Astrocyte of the cerebellum (primary cell): ENCODE measurements at regions of chr22 and their contacts with region 1.

Region 1: GRCh38 chr22:31046539-31047226 is 34.4 kb upstream of the SMTN start:
- DNase-seq: no peak
- H3K4me3 ChIP-seq: no peak overlapping the region
- CTCF ChIP-seq: no peak

Region 2: DNA sequence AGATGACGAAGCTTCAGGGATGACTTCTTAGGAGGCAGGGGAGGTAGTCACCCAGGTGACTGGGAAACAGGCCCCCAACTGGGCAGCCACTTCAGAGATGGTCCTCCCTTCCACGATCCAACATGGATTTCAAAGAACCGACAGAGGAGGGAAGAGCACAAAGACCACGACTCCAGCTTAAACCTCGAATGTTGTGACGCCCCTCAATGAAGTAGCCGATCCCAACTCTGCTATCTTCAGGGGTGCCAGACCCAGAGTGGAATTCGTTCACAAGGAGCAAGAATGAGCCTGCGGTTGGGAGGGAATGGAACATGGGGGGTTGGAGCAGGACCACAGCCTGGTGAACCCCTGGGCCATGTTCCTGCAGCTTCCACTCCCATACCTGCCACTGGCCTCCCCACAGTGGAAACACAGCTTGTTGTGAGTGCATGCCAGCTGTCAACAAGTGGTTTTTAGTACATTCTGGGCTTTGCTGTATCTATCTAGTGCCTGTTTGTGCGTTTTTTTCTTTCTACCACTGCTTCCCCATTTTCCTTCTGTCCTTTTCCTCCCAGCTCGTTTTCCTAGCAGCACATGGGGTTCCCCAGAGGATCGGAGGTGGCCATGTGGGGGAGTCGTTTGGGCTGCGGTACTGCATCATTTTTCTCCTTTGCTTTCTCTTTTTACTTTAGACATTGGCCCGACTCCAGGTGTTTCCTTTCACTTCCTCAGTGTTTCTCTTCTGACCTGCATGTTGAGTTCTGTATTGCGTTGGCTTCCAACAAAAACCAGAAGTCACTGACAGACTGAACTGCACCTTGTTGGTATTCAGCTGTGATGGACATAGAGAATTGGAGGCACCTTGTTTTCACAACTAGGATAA is 144.0 kb before region 1 on chr22:
- in situ Hi-C with region 1: no loop called
- DNase-seq: no peak
- H3K4me3 ChIP-seq: no peak overlapping the region
- CTCF ChIP-seq: no peak

Region 3: GRCh38 chr22:30979932-30980331 is 66.8 kb before region 1 on chr22:
- in situ Hi-C with region 1: loop called (anchors 5 kb)
- DNase-seq: no peak
- H3K4me3 ChIP-seq: no peak overlapping the region
- CTCF ChIP-seq: no peak

Region 4: GRCh38 chr22:31080848-31081649 is 34.4 kb after region 1 on chr22 and contains the start of gene SMTN:
- in situ Hi-C with region 1: no loop called
- DNase-seq: peak; percentile 64
- H3K4me3 ChIP-seq: peak within 1 kb of the TSS; percentile 61
- CTCF ChIP-seq: no peak

Region 5: DNA sequence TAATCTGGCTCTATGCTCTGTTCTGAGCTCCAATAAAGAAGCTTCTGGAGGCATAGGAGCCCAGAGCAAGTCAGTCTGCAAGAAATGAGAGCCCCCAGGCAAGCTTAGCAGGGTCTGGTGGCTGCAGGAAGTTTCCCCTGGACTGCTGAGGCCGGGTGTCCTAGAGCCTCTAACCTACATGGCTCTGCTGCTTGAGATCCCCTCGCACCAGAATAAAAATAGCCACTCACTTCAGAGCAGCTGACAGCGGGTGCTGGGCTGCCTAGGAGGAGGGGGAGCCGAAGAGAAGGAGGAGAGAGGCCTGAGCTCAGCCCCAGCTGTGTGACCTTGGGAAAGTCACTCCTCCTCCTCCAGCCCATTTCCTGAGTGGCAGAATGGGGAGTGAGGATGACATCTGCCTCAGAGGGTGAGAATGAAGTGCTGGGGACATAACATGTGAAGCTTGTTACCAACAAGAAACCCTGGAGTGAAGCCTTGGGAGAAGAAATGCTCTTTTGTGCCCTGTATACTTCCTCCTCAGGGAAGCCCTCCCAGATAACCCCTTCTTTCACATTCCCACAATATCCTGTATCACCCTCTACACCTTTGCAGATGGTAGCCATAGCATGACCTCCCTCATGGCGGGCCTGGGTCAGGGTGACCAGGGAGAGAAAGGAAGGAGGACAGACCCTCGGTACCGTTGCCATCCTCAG is 72.5 kb after region 1 on chr22:
- in situ Hi-C with region 1: loop called (anchors 5 kb)
- DNase-seq: no peak
- H3K4me3 ChIP-seq: no peak overlapping the region
- CTCF ChIP-seq: no peak